ENCODE measurements at regions of chr1 and their contacts with region 1.

Region 1: DNA sequence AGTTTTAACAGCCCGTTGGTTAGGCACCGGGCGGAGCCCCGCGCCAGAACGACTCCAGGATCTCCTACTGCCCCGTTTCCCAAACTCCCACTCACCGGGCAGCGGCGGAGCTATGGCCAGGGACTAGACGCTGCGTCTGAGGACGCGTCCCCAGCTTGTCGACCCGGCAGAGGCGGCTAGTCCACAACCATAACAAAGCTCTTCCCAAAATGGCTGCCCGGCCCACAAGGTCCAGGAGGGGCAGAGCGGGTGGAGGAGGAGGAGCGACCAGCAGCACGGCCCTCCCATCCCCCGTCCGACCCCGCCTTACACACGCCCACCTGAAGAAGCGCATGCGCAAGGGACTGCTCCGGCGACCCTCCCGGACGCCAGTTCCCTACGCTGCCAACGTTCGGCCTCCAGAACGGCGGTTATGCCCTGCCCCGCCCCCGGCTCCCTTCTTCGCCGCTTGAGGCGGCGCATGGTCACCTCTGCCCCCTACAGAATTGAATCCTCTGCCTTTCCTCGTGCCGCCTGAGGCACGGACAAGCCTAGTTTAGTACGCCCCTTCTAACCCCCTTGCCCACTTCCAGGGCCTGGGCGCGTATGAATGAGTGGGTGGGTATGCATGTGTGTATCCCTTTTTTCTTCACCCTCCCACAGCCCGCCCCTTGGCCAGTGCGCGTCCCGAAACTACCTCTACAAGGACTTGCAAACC is at the start of gene GPBP1L1:
- DNase-seq: peak; percentile 96
- H3K4me3 Mint-ChIP-seq: peak within 1 kb of the TSS; percentile 98
- H3K27ac Mint-ChIP-seq: peak within 1 kb of the TSS; percentile 100
- H3K4me1 Mint-ChIP-seq: peaks cover 21% of the 10 kb centered on the region
- H3K27me3 Mint-ChIP-seq: no peaks in the 10 kb centered on the region
- total RNA-seq, gene GPBP1L1: 100 and 103 TPM in 2 replicates

Region 2: GRCh38 chr1:44799770-44800584 is 886.5 kb before region 1 on chr1 and contains the start of gene PLK3:
- intact Hi-C with region 1: loop called (anchors 10 kb)
- DNase-seq: peak; percentile 97
- H3K4me3 Mint-ChIP-seq: peak within 1 kb of the TSS; percentile 97
- H3K27ac Mint-ChIP-seq: peak within 1 kb of the TSS; percentile 99
- H3K4me1 Mint-ChIP-seq: peaks cover 23% of the 10 kb centered on the region
- H3K27me3 Mint-ChIP-seq: no peaks in the 10 kb centered on the region
- total RNA-seq, gene PLK3: 128 and 135 TPM in 2 replicates

Region 3: GRCh38 chr1:45339789-45340570 is 346.5 kb before region 1 on chr1 and contains the starts of genes MUTYH and TOE1:
- intact Hi-C with region 1: loop called (anchors 1 kb)
- DNase-seq: peak; percentile 95
- H3K4me3 Mint-ChIP-seq: peak within 1 kb of the TSS; percentile 95
- H3K27ac Mint-ChIP-seq: peak within 1 kb of the TSS; percentile 99
- H3K4me1 Mint-ChIP-seq: peaks cover 37% of the 10 kb centered on the region
- H3K27me3 Mint-ChIP-seq: no peaks in the 10 kb centered on the region
- total RNA-seq, gene MUTYH: 50.1 and 50.9 TPM in 2 replicates
- total RNA-seq, gene TOE1: 26.3 and 29.3 TPM in 2 replicates

Region 4: DNA sequence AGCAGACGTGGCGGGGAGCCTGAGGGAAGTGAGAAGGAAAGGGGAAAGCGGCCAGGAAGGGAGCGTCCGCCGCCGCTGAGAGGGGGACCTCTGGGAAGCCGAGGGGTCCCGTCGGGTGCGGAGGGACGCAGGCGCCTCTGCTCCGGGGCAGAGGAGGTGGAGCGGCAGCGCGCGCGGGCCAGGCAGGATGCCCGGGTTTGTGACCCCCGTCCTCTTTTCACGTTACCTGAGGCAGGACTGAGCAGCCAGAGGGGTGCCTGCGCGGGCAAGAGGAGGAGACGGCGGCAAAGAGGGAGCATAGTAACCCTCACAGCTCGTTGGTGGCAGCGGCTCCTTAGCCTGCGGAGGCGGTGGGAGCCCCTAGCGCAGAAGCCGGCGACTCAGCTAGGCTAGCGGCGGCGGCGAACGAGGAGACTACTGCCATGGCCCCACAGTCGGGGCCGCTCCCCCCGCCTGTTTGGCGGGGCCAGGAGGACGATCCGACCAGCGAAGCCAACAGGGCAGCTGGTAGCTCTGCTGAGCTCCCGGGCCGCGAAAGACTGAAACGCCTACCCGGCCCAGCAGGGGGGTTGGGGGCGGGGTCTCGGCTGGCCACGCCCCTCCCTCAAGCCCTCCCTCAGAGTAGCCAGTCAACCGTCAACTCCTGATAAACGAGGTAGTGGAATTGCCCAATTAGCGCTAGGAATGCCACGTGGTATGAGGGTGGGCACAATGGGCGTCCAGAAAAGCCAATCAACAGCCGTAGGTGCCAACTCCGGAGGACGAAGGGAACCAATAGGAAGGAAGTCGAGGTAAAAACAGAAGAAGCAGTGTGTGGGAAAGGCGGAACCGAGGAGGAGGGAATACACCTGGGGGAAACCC is 195.6 kb before region 1 on chr1 and contains the start of gene TESK2:
- intact Hi-C with region 1: loop called (anchors 1 kb)
- DNase-seq: peak; percentile 97
- H3K4me3 Mint-ChIP-seq: no peak within 1 kb of the TSS
- H3K27ac Mint-ChIP-seq: no peak within 1 kb of the TSS
- H3K4me1 Mint-ChIP-seq: peaks cover 9% of the 10 kb centered on the region
- H3K27me3 Mint-ChIP-seq: peaks cover 9% of the 10 kb centered on the region
- total RNA-seq, gene TESK2: 2.3 and 2.9 TPM in 2 replicates

Region 5: GRCh38 chr1:45629035-45629434 is 57.4 kb before region 1 on chr1:
- intact Hi-C with region 1: no loop called
- DNase-seq: no peak
- H3K4me3 Mint-ChIP-seq: no peak overlapping the region
- H3K27ac Mint-ChIP-seq: no peak overlapping the region
- H3K4me1 Mint-ChIP-seq: no peaks in the 10 kb centered on the region
- H3K27me3 Mint-ChIP-seq: no peaks in the 10 kb centered on the region

Region 6: GRCh38 chr1:45654540-45655280 is 31.8 kb before region 1 on chr1:
- intact Hi-C with region 1: loop called (anchors 2 kb)
- DNase-seq: no peak
- H3K4me3 Mint-ChIP-seq: no peak overlapping the region
- H3K27ac Mint-ChIP-seq: peak overlapping the region; percentile 46
- H3K4me1 Mint-ChIP-seq: peaks cover 14% of the 10 kb centered on the region
- H3K27me3 Mint-ChIP-seq: no peaks in the 10 kb centered on the region

Region 7: DNA sequence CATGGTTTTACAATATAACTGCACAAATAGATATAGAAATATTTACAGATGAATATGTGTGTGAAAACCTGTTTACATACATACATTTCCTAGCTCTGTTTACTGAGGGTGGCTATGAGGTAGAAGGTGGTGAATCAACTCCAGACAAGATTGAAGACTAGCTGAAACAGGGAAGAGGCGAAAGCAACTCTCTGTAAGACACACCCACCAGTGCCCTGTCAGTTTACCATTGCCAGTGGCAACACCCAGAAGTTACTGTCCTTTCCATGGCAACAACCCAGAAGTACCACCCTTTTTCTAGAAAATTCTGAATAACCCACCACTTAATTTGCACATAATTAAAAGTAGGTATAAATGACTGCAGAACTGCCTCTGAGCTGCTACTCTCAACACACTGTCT is 18.2 kb after region 1 on chr1:
- intact Hi-C with region 1: no loop called
- DNase-seq: no peak
- H3K4me3 Mint-ChIP-seq: no peak overlapping the region
- H3K27ac Mint-ChIP-seq: no peak overlapping the region
- H3K4me1 Mint-ChIP-seq: no peaks in the 10 kb centered on the region
- H3K27me3 Mint-ChIP-seq: no peaks in the 10 kb centered on the region

Region 8: DNA sequence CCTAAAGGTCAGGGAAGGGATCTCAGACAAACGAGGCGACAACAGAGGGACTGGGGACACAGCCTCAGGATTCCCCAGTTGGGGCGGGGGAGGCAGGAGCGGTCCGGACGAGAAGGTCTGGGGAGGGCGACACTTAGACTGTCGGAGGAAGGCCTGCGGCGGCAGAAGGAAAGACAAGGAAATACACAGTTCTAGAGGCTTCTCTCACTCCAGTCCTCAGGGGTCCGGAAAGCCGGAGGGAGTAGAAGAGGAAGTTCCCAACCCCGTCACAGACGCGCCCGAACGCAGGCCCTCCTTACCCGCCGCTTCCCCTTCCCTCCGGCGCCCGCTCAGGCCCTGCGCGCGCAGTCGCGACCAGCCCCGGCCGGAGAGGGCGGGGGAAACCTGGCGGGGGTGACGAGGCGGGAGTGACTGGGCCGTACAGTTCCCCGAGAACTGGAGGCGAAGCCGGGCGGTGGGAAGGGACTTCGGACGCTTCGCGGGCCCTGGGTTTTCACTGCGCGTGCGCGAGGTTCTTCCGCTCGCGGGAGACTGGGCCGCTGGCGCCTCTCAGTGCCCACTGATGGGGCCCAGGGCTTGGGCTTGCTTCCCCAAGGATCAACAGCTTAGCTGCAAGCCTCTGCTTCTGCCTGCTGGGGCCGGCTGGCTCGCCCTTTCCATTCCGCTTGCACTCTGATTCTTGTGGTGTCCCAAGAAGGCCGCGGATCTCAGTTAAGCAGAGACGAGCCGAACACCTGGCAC is 64.0 kb after region 1 on chr1 and contains the start of gene IPP:
- intact Hi-C with region 1: loop called (anchors 1 kb)
- DNase-seq: peak; percentile 95
- H3K4me3 Mint-ChIP-seq: peak within 1 kb of the TSS; percentile 96
- H3K27ac Mint-ChIP-seq: peak within 1 kb of the TSS; percentile 98
- H3K4me1 Mint-ChIP-seq: peaks cover 14% of the 10 kb centered on the region
- H3K27me3 Mint-ChIP-seq: no peaks in the 10 kb centered on the region
- total RNA-seq, gene IPP: 14.7 and 15.6 TPM in 2 replicates

Region 9: DNA sequence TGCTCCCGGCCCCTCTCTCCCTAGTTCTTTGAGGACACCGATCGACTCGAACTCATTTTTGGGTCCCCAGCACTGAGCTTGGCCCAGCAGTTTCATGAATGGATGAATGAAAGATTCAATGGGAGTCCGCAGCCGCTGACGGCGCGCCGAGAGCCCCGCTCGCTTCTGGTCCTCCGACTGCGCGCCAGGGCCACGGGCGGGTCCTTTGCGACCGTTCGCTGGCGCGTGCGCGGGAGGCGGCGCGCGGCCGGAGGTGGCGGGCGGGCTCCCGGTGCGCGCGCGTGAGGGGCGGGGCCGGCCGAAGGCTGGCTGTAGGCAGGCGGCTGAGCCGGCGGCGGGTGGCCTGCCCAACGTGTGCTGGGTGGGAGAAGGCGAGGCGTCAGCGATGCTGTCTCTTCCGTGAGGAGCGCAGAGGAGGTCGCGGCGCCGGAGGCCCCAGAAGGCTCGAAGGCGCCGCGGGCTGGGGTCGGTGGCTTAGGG is 116.9 kb after region 1 on chr1 and contains the start of gene MAST2:
- intact Hi-C with region 1: loop called (anchors 2 kb)
- DNase-seq: peak; percentile 83
- H3K4me3 Mint-ChIP-seq: peak within 1 kb of the TSS; percentile 95
- H3K27ac Mint-ChIP-seq: peak within 1 kb of the TSS; percentile 95
- H3K4me1 Mint-ChIP-seq: peaks cover 29% of the 10 kb centered on the region
- H3K27me3 Mint-ChIP-seq: no peaks in the 10 kb centered on the region
- total RNA-seq, gene MAST2: 33.4 and 38.6 TPM in 2 replicates

Measured in activated T-helper 2 cell treated with anti-CD3 and anti-CD28 coated beads, Interferon-gamma antibody, Interleukin-2, Interleukin-4, amounts not matched to agents 10 μg/mL and 5 μg/mL and 100 μg/mL, durations not matched to agents 14 hours and 24 hours and 36 hours (primary cell).